ENCODE measurements at regions of chr1 and their contacts with region 1.

Region 1: DNA sequence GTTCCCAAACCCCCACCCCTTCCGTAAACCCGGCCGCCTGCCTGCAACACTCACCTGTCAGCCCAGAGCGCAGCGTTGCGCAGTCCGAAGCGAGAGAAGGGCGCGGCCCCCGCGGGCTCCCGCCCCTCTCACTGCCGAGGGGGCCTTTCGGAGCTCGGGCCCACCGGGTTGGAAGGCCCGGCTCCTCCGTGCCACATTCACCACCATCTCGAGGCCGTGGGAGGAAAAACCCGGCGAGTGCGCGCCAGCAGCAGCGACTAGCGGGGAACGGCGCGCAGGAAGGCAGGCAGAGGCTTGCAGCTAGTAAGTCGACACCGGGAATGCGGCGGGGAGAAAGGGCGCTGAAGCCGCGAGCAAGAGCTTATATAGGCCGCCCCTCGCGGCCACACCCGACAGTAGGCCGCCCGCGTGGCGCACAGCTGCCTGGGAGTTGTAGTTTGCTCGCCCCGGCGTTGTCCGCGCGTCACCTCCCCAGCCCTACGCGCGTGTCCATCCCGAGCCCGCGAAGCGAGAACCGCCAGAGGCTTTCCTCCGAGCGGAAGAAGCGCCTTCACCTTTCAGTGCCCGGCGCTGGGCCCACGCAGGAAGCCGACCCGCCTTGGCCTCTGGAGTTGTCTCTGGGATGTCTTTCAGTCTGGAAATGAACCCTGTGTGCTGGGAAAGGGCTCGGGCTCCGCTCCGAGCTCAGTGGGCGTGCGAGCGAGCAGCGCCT is 10.4 kb upstream of the RAB42 start:
- DNase-seq: peak; percentile 95
- H3K4me3 Mint-ChIP-seq: peak overlapping the region; percentile 96
- H3K27ac Mint-ChIP-seq: peak overlapping the region; percentile 94
- H3K4me1 Mint-ChIP-seq: peaks cover 21% of the 10 kb centered on the region
- H3K27me3 Mint-ChIP-seq: no peaks in the 10 kb centered on the region

Region 2: DNA sequence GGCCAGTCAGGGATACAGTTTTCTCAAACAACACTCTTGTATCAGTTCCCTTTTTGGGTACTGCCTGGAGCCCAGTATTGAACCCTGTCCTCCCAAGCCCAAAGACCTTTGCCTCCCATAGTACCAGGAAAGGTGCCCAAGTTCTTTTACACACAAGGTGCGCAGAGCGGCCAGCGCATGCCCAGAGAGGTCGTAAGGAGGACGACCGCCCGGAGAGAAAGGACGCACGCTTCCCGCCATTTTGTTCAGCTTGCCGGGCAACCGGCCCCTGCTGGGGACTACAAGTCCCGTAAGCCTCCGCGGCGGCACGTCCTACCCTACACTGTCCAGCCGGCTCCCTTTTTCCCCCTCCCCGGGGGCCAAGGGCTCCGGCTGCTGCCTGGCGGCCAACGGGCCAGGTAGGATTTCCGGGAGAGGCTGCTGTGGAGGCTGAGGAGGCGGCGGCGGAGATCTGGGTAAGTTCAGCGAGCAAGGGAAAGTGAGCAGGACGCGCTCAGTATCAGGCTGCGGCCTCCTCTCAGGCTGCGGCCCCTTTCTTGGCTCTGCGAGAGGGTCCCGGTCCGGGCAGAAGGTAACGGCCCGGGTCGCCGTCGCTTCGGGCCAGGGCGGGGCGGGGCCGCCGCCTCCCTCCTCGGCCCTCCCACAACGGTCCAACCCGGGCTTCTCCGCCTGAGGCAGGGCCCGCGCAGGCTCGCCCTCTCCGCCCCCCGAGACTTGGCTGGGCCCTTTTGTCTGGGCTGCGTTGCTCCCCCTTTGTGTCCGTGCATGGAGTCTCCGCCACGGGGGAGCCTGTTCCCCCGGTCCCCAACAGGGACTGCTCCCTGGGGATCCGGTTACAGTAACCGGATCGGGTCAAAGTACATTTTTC is 212.1 kb before region 1 on chr1 and contains the start of gene PHACTR4:
- intact Hi-C with region 1: loop called (anchors 2 kb)
- DNase-seq: peak; percentile 77
- H3K4me3 Mint-ChIP-seq: peak within 1 kb of the TSS; percentile 91
- H3K27ac Mint-ChIP-seq: peak within 1 kb of the TSS; percentile 93
- H3K4me1 Mint-ChIP-seq: peaks cover 26% of the 10 kb centered on the region
- H3K27me3 Mint-ChIP-seq: no peaks in the 10 kb centered on the region
- total RNA-seq, gene PHACTR4: 30.2 and 32.1 TPM in 2 replicates

Region 3: DNA sequence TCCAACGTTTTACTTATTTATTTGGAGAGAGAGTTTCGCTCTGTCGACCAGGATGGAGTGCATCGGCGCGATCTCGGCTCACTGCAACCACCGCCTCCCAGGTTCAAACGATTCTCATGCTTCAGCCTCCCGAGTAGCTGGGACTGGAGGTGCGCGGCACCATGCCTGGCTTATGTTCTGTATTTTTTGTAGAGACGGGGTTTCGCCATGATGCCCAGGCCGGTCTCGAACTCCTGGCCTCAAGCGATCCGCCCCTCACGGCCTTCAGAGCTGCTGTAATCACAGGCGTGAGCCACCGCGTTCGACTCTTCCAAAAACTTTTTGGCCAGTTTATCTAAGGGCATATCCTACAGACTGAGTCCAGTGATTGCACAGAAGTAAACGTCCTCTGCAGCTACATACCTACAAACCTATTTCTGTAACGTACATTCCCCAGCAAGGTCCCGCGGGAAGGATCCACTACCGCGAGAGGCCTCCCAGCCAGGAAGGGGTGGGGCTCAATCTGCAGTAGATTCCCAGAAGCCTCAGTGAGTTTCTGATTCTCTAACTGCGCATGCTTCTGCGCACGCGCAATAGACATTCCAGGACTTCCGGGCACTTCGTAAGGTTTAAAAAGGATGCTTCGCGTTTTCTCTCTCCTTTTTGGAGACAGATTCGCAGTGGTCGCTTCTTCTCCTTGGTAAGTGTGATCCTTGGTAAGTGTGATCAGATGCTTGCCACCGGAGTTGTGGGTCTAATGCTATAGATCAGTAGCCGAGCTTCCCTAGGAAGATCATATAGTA is 76.1 kb before region 1 on chr1 and contains the start of gene RCC1:
- intact Hi-C with region 1: loop called (anchors 2 kb)
- DNase-seq: peak; percentile 96
- H3K4me3 Mint-ChIP-seq: peak within 1 kb of the TSS; percentile 100
- H3K27ac Mint-ChIP-seq: peak within 1 kb of the TSS; percentile 99
- H3K4me1 Mint-ChIP-seq: peaks cover 29% of the 10 kb centered on the region
- H3K27me3 Mint-ChIP-seq: no peaks in the 10 kb centered on the region
- total RNA-seq, gene RCC1: 128 and 136 TPM in 2 replicates

Region 4: GRCh38 chr1:28552758-28553663 is 28.7 kb before region 1 on chr1 and contains the start of gene TRNAU1AP:
- intact Hi-C with region 1: loop called (anchors 1 kb)
- DNase-seq: peak; percentile 97
- H3K4me3 Mint-ChIP-seq: peak within 1 kb of the TSS; percentile 91
- H3K27ac Mint-ChIP-seq: peak within 1 kb of the TSS; percentile 93
- H3K4me1 Mint-ChIP-seq: peaks cover 6% of the 10 kb centered on the region
- H3K27me3 Mint-ChIP-seq: no peaks in the 10 kb centered on the region
- total RNA-seq, gene TRNAU1AP: 49.4 and 55.4 TPM in 2 replicates

Region 5: GRCh38 chr1:28642847-28643635 is 61.3 kb after region 1 on chr1 and contains the start of gene TAF12:
- intact Hi-C with region 1: loop called (anchors 1 kb)
- DNase-seq: peak; percentile 88
- H3K4me3 Mint-ChIP-seq: peak within 1 kb of the TSS; percentile 99
- H3K27ac Mint-ChIP-seq: peak within 1 kb of the TSS; percentile 97
- H3K4me1 Mint-ChIP-seq: peaks cover 37% of the 10 kb centered on the region
- H3K27me3 Mint-ChIP-seq: no peaks in the 10 kb centered on the region
- total RNA-seq, gene TAF12: 30.8 and 32.0 TPM in 2 replicates

Region 6: DNA sequence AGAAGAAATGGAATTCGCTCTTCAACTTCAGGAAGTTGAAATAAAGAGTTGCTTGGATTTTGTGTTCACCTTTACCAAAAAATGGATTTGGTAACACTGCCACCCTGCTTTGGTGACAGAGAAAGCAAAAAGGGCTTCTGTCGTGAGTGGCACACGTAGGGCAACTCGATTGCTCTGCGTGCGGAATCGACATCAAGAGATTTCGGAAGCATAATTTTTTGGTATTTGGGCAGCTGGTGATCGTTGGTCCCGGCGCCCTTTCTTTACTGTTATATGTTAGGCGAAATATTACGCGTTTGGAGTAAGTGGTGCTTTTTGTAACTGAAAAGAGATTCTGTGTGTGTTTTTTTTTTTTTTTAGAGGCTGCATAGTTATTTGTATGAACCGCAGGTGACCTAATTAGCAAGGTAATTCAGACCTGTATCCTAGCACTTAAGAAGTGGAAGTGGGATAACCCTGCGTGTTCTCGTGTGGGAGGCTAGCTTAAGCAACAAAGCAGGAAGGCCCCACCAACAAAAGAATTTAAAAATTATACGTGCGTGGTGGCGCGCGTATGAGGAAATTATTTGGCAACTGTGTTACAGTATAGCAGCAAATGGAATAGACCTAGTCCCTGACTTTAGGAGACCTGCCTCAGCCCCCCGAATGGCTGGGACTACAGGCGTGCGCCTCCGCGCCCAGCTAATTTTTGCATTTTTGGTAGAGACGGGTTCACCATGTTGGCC is 66.9 kb after region 1 on chr1 and contains the start of gene RNU11:
- intact Hi-C with region 1: loop called (anchors 1 kb)
- DNase-seq: peak; percentile 84
- H3K4me3 Mint-ChIP-seq: peak within 1 kb of the TSS; percentile 81
- H3K27ac Mint-ChIP-seq: peak within 1 kb of the TSS; percentile 99
- H3K4me1 Mint-ChIP-seq: peaks cover 25% of the 10 kb centered on the region
- H3K27me3 Mint-ChIP-seq: no peaks in the 10 kb centered on the region
- total RNA-seq, gene RNU11: not detected in 2 replicates

Measured in activated T-helper 2 cell treated with anti-CD3 and anti-CD28 coated beads, Interferon-gamma antibody, Interleukin-2, Interleukin-4, amounts not matched to agents 10 μg/mL and 5 μg/mL and 100 μg/mL, durations not matched to agents 14 hours and 24 hours and 36 hours (primary cell).